ENCODE measurements at regions of chr3 and their contacts with region 1.

Region 1: GRCh38 chr3:32302601-32303398 is 64.3 kb downstream of the CMTM8 start:
- DNase-seq: no peak
- H3K4me3 Mint-ChIP-seq: peak overlapping the region; percentile 40
- H3K27ac Mint-ChIP-seq: peak overlapping the region; percentile 98
- H3K4me1 Mint-ChIP-seq: peaks cover 69% of the 10 kb centered on the region
- H3K27me3 Mint-ChIP-seq: no peaks in the 10 kb centered on the region

Region 2: DNA sequence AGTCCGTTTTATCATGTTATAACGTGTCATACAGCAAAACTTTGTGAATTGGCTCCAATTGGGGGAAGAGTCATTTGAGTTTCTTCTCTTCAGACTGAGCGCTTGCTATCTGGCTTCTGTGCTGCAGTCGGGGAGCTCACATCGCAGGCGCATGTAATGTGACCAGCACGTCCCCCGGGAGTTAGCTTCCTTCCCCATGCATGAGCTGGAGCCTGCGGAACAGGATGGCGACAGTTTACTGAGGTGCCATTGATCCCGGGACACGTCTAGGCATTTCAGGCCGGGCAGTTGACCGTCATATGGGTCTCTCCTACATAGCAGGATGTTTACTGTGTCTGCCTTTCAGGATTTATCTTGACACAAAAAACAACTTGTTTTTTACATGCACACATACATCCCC is 19.5 kb before region 1 on chr3:
- CTCF ChIA-PET with region 1: interaction called, 3 read pairs
- POLR2A ChIA-PET with region 1: interaction called, 12 read pairs
- DNase-seq: no peak
- H3K4me3 Mint-ChIP-seq: no peak overlapping the region
- H3K27ac Mint-ChIP-seq: no peak overlapping the region
- H3K4me1 Mint-ChIP-seq: peaks cover 27% of the 10 kb centered on the region
- H3K27me3 Mint-ChIP-seq: no peaks in the 10 kb centered on the region

Measured in activated CD4-positive, alpha-beta T cell treated with anti-CD3 and anti-CD28 coated beads, Interleukin-2, amount 10 ng/mL, durations not matched to agents 7 days and 5 days (primary cell).